ENCODE measurements at regions of chr15 and their contacts with region 1.

Region 1: DNA sequence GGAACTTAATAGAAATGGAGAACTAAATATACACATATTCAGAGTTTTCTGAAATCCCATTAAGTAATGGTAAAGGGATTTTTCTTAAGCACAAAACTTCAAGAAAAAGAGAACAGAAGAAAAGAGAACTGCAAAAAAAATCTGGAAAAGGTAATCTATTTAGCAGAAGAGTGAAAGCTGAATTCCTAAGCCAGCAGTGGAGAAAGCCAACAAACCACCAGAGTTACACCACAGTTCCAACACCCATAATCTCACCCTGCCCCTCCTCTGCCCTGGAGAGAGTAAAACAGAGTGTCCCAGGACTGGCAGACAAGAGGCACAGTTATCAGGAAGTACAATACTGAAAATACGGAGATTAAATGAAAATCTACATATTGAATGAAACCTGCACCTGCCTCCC is 29.4 kb downstream of the TP53BP1 start:
- DNase-seq: no peak
- ATAC-seq: peak in 2 of 8 donors; percentile 54 to 60
- H3K4me3 ChIP-seq: no peak overlapping the region
- H3K27ac ChIP-seq: no peak overlapping the region
- H3K4me1 ChIP-seq: peaks cover 0 to 7% (median 0%) of the 10 kb centered on the region in 9 donors
- H3K27me3 ChIP-seq: no peaks in the 10 kb centered on the region
- CTCF ChIP-seq: no peak

Region 2: GRCh38 chr15:43143203-43143941 is 320.1 kb before region 1 on chr15:
- intact Hi-C with region 1: no loop called
- DNase-seq: no peak
- ATAC-seq: no peak
- H3K4me3 ChIP-seq: no peak overlapping the region
- H3K27ac ChIP-seq: no peak overlapping the region
- H3K4me1 ChIP-seq: peaks cover 0 to 18% (median 0%) of the 10 kb centered on the region in 9 donors
- H3K27me3 ChIP-seq: no peaks in the 10 kb centered on the region
- CTCF ChIP-seq: no peak

Region 3: GRCh38 chr15:43420876-43421275 is 42.6 kb before region 1 on chr15:
- intact Hi-C with region 1: loop called in 1 of 10 experiments (anchors 1 kb)
- DNase-seq: no peak
- ATAC-seq: peak in 1 of 8 donors; percentile 16
- H3K4me3 ChIP-seq: no peak overlapping the region
- H3K27ac ChIP-seq: no peak overlapping the region
- H3K4me1 ChIP-seq: no peaks in the 10 kb centered on the region
- H3K27me3 ChIP-seq: no peaks in the 10 kb centered on the region
- CTCF ChIP-seq: no peak

Measured in heart right ventricle (tissue), 16 donors.